ENCODE measurements at regions of chr1 and their contacts with region 1.

Region 1: DNA sequence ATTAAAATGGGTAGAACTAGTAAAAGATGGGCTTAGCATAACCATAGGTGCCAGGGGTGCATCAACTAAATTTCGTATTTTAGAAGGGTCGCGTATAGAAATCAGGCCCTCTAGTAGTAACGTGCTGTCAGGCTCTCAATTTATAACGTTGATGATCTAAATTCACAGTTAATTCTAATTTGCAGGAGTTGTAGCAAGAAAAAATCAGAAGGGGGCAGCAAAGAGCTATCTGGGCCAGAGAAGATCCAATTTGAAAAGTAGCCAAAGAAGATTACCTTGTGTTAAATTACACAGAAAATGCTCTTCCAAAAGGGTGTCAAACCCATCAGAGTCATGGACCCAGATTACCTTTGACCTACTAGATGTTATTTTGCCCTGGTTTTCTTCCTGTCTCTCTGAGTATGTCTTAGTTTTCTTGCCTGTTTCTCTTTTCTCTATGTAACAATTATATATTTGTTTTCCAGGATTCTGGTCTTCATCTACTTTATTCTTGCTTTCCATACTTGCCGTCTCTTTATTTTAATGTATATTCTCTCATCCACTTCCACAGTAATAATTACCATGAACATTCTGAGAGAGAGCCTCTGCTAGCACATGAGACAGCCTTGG is 1030.9 kb downstream of the AMY1C start:
- DNase-seq: no peak
- ATAC-seq: no peak
- H3K4me3 Mint-ChIP-seq: no peak overlapping the region
- H3K27ac Mint-ChIP-seq: no peak overlapping the region
- H3K4me1 Mint-ChIP-seq: no peaks in the 10 kb centered on the region
- H3K27me3 Mint-ChIP-seq: no peaks in the 10 kb centered on the region
- CTCF ChIP-seq: no peak

Region 2: DNA sequence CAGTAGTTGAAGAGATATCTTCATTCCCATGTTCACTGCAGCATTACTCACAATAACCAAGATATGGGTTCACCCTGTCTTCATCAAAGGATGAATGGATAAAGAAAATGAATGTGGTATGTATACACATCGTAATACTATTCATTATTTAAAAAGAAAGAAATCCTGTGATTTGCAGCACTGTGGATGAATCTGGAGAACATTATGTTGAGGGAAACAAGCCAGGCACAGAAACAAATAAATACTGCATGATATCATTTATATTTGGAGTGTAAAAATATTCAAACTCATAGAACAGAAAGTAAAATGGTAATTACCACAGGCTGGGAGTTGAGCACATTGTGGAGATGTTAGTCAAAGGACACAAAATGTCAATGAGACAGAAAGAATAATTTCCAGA is 53.7 kb before region 1 on chr1:
- CTCF ChIA-PET with region 1: no interaction called
- POLR2A ChIA-PET with region 1: no interaction called
- intact Hi-C with region 1: no loop called
- DNase-seq: no peak
- ATAC-seq: no peak
- H3K4me3 Mint-ChIP-seq: no peak overlapping the region
- H3K27ac Mint-ChIP-seq: no peak overlapping the region
- H3K4me1 Mint-ChIP-seq: no peaks in the 10 kb centered on the region
- H3K27me3 Mint-ChIP-seq: no peaks in the 10 kb centered on the region
- CTCF ChIP-seq: no peak

Region 3: DNA sequence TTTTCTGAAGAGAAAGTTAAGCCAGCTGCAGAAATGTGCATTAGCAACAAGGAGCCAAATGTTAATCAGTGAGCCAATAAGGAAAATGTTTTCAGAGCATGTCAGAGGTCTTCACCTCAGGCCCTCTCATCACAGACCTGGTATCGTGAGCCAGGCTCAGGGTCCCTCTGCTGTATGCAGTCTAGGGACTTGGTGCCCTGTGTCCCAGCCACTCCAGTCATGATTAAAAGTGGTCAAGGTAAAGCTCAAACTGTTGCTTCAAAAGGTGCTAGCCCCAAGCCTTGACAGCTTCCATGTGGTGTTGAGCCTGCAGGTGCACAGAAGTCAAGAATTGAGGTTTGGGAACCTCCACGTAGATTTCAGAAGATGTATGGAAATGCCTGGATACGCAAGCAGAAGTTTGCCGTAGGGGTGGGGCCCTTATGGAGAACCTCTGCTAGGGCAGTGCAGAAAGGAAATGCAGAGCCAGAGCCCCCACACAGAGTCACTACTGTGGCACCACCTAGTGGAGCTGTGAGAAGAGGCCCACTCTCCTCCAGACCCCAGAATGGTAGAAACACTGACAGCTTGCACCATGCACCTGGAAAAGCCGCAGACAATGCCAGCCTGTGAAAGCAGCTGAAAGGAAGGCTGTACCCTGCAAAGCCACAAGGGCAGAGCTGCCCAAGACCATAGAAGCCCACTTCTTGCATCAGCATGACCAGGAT is 97.8 kb after region 1 on chr1:
- CTCF ChIA-PET with region 1: no interaction called
- POLR2A ChIA-PET with region 1: no interaction called
- intact Hi-C with region 1: loop called (anchors 1 kb)
- DNase-seq: no peak
- ATAC-seq: no peak
- H3K4me3 Mint-ChIP-seq: no peak overlapping the region
- H3K27ac Mint-ChIP-seq: no peak overlapping the region
- H3K4me1 Mint-ChIP-seq: no peaks in the 10 kb centered on the region
- H3K27me3 Mint-ChIP-seq: no peaks in the 10 kb centered on the region
- CTCF ChIP-seq: no peak

Region 4: DNA sequence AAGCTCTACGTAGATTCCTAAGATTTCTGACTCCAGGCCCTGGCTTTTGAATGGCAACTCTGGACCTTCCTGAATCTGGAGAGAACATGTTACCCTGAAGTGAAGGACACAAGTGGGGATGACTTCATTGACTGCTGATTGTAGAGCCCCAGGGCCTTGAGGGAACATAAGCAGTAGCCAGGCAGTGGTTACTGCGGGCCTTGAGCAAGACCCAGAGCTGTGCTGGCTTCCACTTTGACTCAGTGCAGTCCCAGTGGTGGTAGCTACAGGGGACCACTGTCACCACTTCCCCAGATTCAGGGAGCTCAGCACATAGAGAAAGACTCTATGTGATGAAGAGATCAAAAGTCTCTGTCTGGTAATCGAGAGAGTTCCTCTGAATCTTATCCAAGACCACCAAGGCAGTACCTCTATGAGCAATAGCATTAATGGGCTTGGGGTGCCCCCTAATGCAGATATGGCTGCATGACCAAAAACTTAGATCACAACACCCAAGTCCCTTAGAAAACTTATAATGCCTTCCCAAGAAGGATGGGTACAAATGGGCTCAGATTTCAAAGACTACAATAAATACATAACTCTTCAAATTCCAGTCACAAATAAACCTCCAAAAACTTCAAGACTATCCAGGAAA is 247.4 kb after region 1 on chr1:
- CTCF ChIA-PET with region 1: no interaction called
- POLR2A ChIA-PET with region 1: no interaction called
- intact Hi-C with region 1: loop called (anchors 5 kb)
- DNase-seq: no peak
- ATAC-seq: no peak
- H3K4me3 Mint-ChIP-seq: no peak overlapping the region
- H3K27ac Mint-ChIP-seq: no peak overlapping the region
- H3K4me1 Mint-ChIP-seq: no peaks in the 10 kb centered on the region
- H3K27me3 Mint-ChIP-seq: no peaks in the 10 kb centered on the region
- CTCF ChIP-seq: no peak

Region 5: DNA sequence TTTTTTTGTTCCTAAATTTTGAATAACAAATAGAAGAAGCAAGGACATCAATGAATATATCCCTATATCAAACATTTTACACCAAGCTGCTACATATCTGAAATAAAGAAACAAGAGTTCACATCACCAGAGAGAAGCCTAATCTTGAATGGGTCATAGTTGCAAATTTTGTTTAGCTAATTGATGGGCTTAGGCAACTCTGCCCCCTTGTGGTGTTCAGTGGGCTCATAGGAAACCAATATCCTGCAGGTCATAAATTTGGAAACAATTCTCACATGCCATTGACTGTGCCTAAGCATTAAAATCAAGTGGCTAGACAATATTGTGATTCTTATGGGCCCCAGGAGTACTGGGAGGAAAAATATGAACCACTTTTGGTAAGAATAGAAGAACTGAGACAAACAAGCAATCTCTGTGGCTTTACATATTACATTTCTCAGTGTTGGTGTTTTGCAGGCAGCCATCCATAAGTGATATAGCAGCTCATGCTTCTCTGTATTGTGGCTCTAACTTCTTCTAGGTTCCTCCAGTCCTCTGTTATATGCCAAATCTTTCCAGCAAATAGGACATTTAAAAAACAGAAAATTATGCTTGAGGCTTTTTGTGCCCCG is 1013.1 kb after region 1 on chr1:
- CTCF ChIA-PET with region 1: interaction called, 11 read pairs
- POLR2A ChIA-PET with region 1: no interaction called
- intact Hi-C with region 1: no loop called
- DNase-seq: no peak
- ATAC-seq: no peak
- H3K4me3 Mint-ChIP-seq: no peak overlapping the region
- H3K27ac Mint-ChIP-seq: no peak overlapping the region
- H3K4me1 Mint-ChIP-seq: no peaks in the 10 kb centered on the region
- H3K27me3 Mint-ChIP-seq: no peaks in the 10 kb centered on the region
- CTCF ChIP-seq: no peak